Thyroid gland (tissue), 4 donors: ENCODE measurements at regions of chr10 and their contacts with region 1.

Region 1: GRCh38 chr10:100338434-100339036 is 8.5 kb upstream of the SCD start:
- DNase-seq: peak; percentile 71 to 78
- H3K4me3 ChIP-seq: no peak overlapping the region
- H3K27ac ChIP-seq: no peak overlapping the region
- H3K4me1 ChIP-seq: no peaks in the 10 kb centered on the region
- H3K27me3 ChIP-seq: no peaks in the 10 kb centered on the region
- CTCF ChIP-seq: peak; percentile 78 to 91 (median 87)
- POLR2A ChIP-seq: no peak

Region 2: GRCh38 chr10:99888622-99889021 is 449.9 kb before region 1 on chr10:
- intact Hi-C with region 1: no loop called
- DNase-seq: no peak
- H3K4me3 ChIP-seq: no peak overlapping the region
- H3K27ac ChIP-seq: no peak overlapping the region
- H3K4me1 ChIP-seq: no peaks in the 10 kb centered on the region
- H3K27me3 ChIP-seq: no peaks in the 10 kb centered on the region
- CTCF ChIP-seq: no peak
- POLR2A ChIP-seq: no peak

Region 3: GRCh38 chr10:100327007-100327717 is 11.4 kb before region 1 on chr10:
- intact Hi-C with region 1: no loop called
- DNase-seq: no peak
- H3K4me3 ChIP-seq: no peak overlapping the region
- H3K27ac ChIP-seq: no peak overlapping the region
- H3K4me1 ChIP-seq: no peaks in the 10 kb centered on the region
- H3K27me3 ChIP-seq: no peaks in the 10 kb centered on the region
- CTCF ChIP-seq: no peak
- POLR2A ChIP-seq: no peak

Region 4: DNA sequence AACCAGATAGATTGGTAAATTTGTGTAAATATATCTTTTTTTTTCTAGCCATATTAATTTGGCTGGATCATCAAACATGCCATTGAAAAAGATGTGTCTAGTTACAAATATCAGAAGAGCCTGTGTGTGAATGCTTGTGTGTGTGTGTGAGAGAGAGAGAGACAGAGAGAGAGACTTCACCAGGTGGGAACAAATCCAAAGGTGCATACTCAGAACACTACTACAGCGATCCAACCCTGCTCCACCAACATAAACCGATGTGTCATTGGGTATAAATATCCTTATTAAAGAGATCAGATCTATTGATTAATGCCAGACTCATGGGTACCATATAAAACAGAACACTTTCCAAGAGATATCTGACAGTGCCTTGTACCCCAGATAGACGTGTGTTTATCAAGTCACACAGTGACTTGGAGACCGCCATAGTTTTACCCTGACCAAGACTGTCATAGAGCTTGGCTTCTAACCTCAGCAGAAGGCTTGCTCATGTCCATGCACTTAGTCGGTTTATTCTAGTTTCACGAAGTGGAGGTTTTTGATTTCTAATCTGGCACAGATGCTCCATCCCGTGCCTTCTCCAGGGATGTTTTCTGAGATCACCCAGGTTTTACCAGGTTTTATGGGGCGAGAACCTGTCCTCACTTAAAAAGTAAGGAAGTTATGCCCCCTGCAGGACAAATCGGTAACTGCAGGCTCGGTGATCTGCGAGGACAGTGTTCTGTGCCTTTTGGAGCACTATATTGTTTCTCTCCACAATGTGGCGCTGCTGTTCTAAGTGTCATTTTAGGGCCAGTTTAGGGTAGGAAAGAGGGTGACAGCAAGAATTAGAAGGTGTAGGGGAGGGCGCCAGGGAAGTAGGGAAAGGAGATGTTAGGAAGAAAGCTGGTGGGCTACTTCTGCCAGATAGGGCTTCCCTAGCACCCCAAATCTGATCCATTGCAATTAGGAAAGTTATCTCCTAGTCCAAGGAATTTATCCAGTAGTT is 95.0 kb after region 1 on chr10:
- intact Hi-C with region 1: loop called (anchors 2 kb)
- DNase-seq: peak; percentile 92 to 95
- H3K4me3 ChIP-seq: no peak overlapping the region
- H3K27ac ChIP-seq: no peak overlapping the region
- H3K4me1 ChIP-seq: no peaks in the 10 kb centered on the region
- H3K27me3 ChIP-seq: no peaks in the 10 kb centered on the region
- CTCF ChIP-seq: peak; percentile 92 to 99 (median 98)
- POLR2A ChIP-seq: no peak